ENCODE measurements at regions of chr22 and their contacts with region 1.

Region 1: GRCh38 chr22:23178512-23179254 is 1.6 kb upstream of the BCR start:
- DNase-seq: peak; percentile 73 to 87 (median 86)
- ATAC-seq: peak; percentile 56 to 63
- H3K4me3 ChIP-seq: no peak overlapping the region
- H3K27ac ChIP-seq: no peak overlapping the region
- H3K4me1 ChIP-seq: peaks cover 8% of the 10 kb centered on the region
- H3K27me3 ChIP-seq: no peaks in the 10 kb centered on the region

Region 2: GRCh38 chr22:23237201-23237798 is 58.6 kb after region 1 on chr22:
- intact Hi-C with region 1: loop called in 3 of 4 experiments (anchors 2 to 10 kb)
- DNase-seq: peak; percentile 82 to 92 (median 90)
- ATAC-seq: peak; percentile 67 to 70
- H3K4me3 ChIP-seq: no peak overlapping the region
- H3K27ac ChIP-seq: no peak overlapping the region
- H3K4me1 ChIP-seq: peaks cover 17% of the 10 kb centered on the region
- H3K27me3 ChIP-seq: no peaks in the 10 kb centered on the region

Region 3: DNA sequence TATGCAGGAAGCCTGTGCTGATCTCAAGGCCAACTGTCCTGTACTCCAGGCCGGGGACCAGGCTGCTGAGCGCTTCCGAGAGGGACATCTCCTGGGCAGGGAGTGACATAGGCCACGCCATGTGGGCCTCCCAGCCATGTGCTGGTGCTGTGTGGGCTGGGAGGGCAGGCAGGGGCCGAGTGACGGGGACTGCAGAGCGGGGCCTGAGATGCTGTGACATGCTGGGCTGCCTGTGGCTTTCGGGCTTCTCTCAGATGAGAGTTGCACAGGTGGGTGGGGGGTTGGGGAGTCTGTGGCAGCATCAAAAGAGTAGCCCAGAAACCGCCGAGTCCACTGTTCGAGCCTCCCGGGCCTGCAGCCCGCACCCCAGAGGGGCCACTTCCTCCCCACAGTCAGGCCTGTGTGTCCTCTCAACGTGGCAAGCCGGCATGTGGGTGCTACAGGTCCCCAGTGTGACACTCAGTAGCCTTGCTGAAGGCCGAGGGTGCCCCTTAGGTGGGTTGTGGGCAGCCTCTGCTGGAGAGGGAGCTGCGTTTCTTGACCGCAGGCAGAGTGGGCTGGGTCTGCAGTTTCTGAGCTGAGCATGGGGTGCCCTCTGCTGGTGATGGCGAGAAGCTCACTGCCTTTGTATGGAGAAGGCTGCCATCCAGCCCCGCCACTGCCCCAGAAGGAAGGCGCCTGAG is 102.9 kb after region 1 on chr22:
- intact Hi-C with region 1: loop called (anchors 1 to 2 kb)
- DNase-seq: peak; percentile 83 to 93 (median 92)
- ATAC-seq: peak; percentile 71 to 76
- H3K4me3 ChIP-seq: no peak overlapping the region
- H3K27ac ChIP-seq: no peak overlapping the region
- H3K4me1 ChIP-seq: peaks cover 10% of the 10 kb centered on the region
- H3K27me3 ChIP-seq: no peaks in the 10 kb centered on the region

Region 4: GRCh38 chr22:23385291-23386244 is 206.9 kb after region 1 on chr22:
- intact Hi-C with region 1: loop called in 2 of 4 experiments (anchors 5 to 10 kb)
- DNase-seq: peak; percentile 79 to 93 (median 92)
- ATAC-seq: peak; percentile 77 to 82
- H3K4me3 ChIP-seq: no peak overlapping the region
- H3K27ac ChIP-seq: no peak overlapping the region
- H3K4me1 ChIP-seq: no peaks in the 10 kb centered on the region
- H3K27me3 ChIP-seq: no peaks in the 10 kb centered on the region